ENCODE measurements at regions of chr15 and their contacts with region 1.

Region 1: GRCh38 chr15:78422571-78423340 is 15.3 kb upstream of the IREB2 start:
- DNase-seq: peak; percentile 61
- H3K4me3 Mint-ChIP-seq: no peak overlapping the region
- H3K27ac Mint-ChIP-seq: no peak overlapping the region
- H3K4me1 Mint-ChIP-seq: no peaks in the 10 kb centered on the region
- H3K27me3 Mint-ChIP-seq: peaks cover 26% of the 10 kb centered on the region
- CTCF ChIP-seq: peak; percentile 73

Region 2: DNA sequence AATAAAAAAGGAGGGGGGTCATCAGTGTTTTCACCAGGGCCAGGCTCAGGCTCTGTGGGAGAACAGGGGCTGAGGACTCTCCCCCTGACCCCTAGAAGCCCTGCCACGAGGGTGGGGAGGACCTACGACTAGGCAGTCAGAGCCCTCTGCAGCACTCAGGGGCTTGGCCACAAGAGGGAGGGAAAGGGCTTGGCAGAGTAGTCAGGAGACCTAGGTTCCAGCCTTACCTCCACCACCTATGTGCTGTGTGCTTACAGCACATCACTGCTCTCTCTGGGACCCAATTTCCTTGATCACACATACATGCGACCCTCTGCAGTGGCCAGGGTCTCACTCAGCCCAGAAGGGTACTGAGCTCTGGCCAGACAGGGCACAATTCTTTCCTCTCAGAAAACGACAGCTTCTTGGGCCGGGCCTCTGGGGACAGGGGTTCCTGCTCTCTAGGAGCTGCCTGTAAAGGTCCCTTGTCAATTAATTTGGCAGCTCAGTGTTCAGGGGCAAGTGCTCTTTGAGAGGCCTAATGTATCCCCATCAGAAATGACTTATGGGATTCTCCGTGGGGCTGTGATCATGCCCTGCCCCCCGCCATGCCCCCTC is 107.0 kb before region 1 on chr15:
- CTCF ChIA-PET with region 1: interaction called, 222 read pairs
- POLR2A ChIA-PET with region 1: interaction called, 3 read pairs
- intact Hi-C with region 1: no loop called
- DNase-seq: peak; percentile 31
- H3K4me3 Mint-ChIP-seq: no peak overlapping the region
- H3K27ac Mint-ChIP-seq: no peak overlapping the region
- H3K4me1 Mint-ChIP-seq: peaks cover 5% of the 10 kb centered on the region
- H3K27me3 Mint-ChIP-seq: no peaks in the 10 kb centered on the region
- CTCF ChIP-seq: no peak

Region 3: DNA sequence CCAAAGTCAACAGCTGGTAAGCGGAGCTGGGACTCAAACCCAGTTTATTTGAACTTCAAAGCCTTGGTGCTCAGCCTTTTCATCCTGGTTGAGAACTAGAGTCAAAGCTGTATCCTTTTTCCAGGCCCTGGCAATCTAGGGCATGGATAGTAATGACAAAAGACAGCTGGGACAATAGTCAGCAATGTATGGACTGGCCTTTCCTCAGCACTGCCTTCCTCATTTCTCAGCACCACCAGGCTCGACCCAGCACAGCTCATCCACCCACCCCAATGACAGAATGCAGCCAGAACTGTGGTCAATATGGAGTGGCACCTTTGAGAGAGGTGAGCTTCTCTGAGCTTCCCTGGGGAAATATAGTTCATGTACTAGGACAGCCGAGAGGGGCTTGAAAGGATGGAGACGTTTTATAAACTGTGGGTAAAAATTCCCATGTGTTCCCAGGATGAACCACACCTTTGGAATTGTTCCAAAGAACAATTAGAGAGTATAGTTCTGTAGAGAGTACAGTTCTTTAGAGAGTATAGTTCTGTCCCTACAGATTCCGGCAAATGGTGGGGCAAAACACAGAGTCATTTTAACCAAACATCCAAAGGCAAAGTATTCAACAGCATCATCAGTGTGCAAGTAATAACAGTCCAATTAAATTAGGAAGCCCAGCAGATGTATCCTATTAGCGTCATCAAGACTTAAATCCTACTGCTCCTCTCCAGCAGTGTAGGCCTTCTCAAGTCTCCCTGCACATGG is 15.0 kb before region 1 on chr15:
- CTCF ChIA-PET with region 1: interaction called, 24 read pairs
- POLR2A ChIA-PET with region 1: interaction called, 5 read pairs
- intact Hi-C with region 1: no loop called
- DNase-seq: no peak
- H3K4me3 Mint-ChIP-seq: no peak overlapping the region
- H3K27ac Mint-ChIP-seq: no peak overlapping the region
- H3K4me1 Mint-ChIP-seq: peaks cover 6% of the 10 kb centered on the region
- H3K27me3 Mint-ChIP-seq: no peaks in the 10 kb centered on the region
- CTCF ChIP-seq: no peak

Region 4: GRCh38 chr15:78502641-78503040 is 79.9 kb after region 1 on chr15:
- CTCF ChIA-PET with region 1: no interaction called
- POLR2A ChIA-PET with region 1: no interaction called
- intact Hi-C with region 1: no loop called
- DNase-seq: no peak
- H3K4me3 Mint-ChIP-seq: no peak overlapping the region
- H3K27ac Mint-ChIP-seq: no peak overlapping the region
- H3K4me1 Mint-ChIP-seq: no peaks in the 10 kb centered on the region
- H3K27me3 Mint-ChIP-seq: no peaks in the 10 kb centered on the region
- CTCF ChIP-seq: no peak

Measured in MCF 10A (cell line).